ENCODE measurements at regions of chr3 and their contacts with region 1.

Region 1: GRCh38 chr3:10224784-10225665 is 23.2 kb upstream of the TATDN2 start:
- DNase-seq: peak; percentile 45
- H3K4me3 Mint-ChIP-seq: peak overlapping the region; percentile 73
- H3K27ac Mint-ChIP-seq: peak overlapping the region; percentile 97
- H3K4me1 Mint-ChIP-seq: peaks cover 74% of the 10 kb centered on the region
- H3K27me3 Mint-ChIP-seq: peaks cover 3% of the 10 kb centered on the region

Region 2: GRCh38 chr3:10142707-10143566 is 82.1 kb before region 1 on chr3:
- intact Hi-C with region 1: loop called (anchors 1 kb)
- DNase-seq: no peak
- H3K4me3 Mint-ChIP-seq: peak overlapping the region; percentile 90
- H3K27ac Mint-ChIP-seq: peak overlapping the region; percentile 85
- H3K4me1 Mint-ChIP-seq: peaks cover 25% of the 10 kb centered on the region
- H3K27me3 Mint-ChIP-seq: no peaks in the 10 kb centered on the region

Region 3: DNA sequence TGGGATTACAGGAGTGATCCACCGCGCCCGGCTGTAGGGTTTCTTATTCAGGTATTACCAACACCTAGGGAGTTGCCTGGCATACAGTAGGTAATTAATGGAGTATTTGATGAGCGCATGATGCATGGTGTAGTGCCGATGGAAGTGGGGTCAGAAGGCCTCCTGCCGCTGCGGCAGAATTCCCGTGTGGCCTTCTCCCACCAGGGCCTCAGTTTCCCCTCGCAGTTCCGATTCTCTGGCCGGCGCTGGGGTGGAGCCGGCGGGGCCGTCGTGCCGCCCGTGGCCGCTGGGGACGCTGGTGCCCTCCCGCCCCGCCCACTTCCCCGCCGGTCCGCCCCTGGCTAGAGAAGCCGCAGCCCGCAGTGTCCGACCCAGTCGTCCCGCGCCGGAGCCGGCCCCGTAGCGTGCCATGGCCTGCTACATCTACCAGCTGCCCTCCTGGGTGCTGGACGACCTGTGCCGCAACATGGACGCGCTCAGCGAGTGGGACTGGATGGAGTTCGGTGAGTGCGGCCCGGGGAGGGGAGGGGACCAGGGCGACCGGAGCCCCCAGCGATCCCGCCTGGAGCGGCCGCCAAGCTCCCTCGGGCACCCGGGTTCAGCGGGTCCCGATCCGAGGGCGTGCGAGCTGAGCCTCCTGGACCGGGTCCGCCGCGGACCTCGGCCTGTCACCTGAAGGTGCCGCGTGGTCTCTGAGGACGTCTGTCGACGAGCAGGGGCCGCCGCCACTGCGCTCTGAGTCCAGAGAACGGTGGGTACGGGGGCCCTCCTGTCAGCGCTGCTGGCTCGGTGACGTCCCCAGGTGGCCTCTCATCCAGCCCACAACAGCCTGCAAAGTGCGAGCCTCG is 60.3 kb before region 1 on chr3 and contains the start of gene IRAK2:
- intact Hi-C with region 1: loop called (anchors 1 kb)
- DNase-seq: peak; percentile 51
- H3K4me3 Mint-ChIP-seq: peak within 1 kb of the TSS; percentile 82
- H3K27ac Mint-ChIP-seq: peak within 1 kb of the TSS; percentile 44
- H3K4me1 Mint-ChIP-seq: peaks cover 35% of the 10 kb centered on the region
- H3K27me3 Mint-ChIP-seq: no peaks in the 10 kb centered on the region
- total RNA-seq, gene IRAK2: 8.1 and 8.6 TPM in 2 replicates

Region 4: DNA sequence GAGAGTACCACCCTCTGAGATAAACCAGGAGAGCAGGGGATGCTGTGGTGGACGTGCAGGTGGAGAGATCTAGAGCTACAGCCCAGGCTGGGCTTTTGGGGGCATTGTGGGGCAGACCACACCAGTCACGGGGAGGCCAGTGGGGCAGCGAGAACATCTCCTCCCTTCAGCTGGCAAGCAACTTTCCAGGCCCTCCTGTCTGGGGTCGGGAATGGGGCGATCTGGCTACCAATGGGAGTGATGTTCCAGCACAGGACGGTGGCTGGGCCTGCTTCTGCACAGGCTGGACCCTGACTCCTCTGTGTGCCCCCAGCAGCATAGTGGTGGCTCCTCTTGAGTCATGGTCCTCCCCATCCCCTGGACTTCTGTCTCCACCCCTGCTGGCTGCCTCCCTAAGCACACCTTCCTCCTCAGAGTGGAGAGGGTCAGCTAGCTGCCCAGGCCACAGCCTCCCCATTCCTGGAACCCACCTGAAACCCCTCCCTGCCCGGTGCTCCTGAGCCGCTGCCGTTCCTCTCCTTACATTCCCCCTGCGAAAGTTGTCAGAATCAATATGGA is 44.2 kb before region 1 on chr3:
- intact Hi-C with region 1: no loop called
- DNase-seq: no peak
- H3K4me3 Mint-ChIP-seq: no peak overlapping the region
- H3K27ac Mint-ChIP-seq: peak overlapping the region; percentile 61
- H3K4me1 Mint-ChIP-seq: peaks cover 28% of the 10 kb centered on the region
- H3K27me3 Mint-ChIP-seq: no peaks in the 10 kb centered on the region

Region 5: DNA sequence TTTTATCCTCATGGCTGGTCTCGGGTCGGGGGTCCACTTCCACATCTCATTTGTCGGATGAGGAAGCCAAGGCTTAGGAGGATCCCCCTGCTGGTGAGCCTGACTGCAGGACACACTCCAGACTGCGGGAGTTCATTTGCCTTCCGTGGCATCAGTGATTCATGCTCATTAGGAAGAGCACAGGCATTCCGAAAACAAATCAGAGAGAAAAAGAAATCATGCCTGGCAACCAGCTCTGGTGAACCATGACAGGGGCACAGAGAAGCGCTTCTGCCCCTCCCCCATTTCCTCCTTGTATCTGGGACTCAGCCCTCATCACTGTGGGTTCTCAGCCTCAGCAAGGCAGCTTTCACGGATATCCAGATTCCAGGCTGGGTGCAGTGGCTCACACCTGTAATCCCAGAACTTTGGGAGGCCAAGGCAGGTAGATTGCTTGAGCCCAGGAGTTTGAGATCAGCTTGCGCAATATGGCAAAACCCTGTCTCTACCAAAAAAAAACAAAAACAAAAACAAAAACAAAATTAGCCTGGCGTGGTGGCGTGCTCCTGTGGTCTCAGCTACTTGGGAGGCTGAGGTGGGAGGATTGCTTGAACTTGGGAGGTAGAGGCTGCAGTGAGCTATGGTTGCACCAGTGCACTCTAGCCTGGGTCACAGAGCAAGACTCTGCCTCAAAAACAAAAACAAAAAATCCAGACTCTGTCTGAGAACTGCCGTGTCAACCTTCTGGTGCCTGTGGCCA is 31.9 kb before region 1 on chr3:
- intact Hi-C with region 1: loop called (anchors 1 kb)
- DNase-seq: no peak
- H3K4me3 Mint-ChIP-seq: peak overlapping the region; percentile 63
- H3K27ac Mint-ChIP-seq: peak overlapping the region; percentile 82
- H3K4me1 Mint-ChIP-seq: peaks cover 75% of the 10 kb centered on the region
- H3K27me3 Mint-ChIP-seq: no peaks in the 10 kb centered on the region

Region 6: GRCh38 chr3:10213156-10213792 is 11.8 kb before region 1 on chr3:
- intact Hi-C with region 1: no loop called
- DNase-seq: no peak
- H3K4me3 Mint-ChIP-seq: no peak overlapping the region
- H3K27ac Mint-ChIP-seq: peak overlapping the region; percentile 10
- H3K4me1 Mint-ChIP-seq: peaks cover 5% of the 10 kb centered on the region
- H3K27me3 Mint-ChIP-seq: no peaks in the 10 kb centered on the region

Region 7: DNA sequence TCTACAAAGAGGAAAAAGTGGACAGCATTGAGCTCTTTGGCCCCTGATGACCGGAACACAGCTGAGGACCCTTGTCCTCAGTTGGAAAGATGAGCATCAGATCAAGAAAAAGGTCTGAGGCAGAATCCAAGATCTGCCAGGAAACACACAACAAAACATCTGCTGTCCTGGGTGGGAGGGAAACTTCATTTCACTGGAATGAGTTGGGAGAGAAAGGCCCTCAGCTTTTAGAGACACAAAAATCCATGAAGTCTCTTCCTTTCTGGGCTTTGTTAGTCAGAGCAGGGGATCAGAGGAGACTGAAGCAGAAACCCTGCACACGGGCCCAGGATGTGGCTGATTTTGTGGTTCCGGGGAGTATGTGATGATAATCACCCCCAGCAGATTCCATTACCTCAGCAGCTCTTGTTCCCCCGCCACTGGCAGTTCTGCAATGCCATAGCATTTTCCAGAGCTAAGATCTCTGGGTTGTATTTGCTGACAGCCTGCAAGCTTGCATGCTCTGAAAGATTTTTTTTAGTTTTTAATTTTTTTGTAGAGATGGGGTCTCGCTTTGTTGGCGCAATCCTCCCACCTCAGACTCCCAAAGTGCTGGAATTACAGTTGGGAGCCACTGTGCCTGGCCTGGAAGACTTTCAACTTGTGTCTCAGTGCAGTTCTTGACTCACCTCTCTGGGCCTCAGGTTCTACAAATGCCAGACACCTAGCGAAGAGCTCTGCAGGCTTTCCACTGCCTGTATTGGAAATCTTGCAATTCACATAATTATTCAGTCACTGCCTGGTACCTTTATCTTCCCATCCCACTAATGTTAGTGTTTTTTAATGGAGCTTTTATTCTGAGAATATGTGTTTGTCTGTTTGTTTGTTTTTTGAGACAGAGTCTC is 17.4 kb after region 1 on chr3:
- intact Hi-C with region 1: loop called (anchors 1 kb)
- DNase-seq: peak; percentile 81
- H3K4me3 Mint-ChIP-seq: peak overlapping the region; percentile 68
- H3K27ac Mint-ChIP-seq: peak overlapping the region; percentile 98
- H3K4me1 Mint-ChIP-seq: peaks cover 57% of the 10 kb centered on the region
- H3K27me3 Mint-ChIP-seq: no peaks in the 10 kb centered on the region

Region 8: DNA sequence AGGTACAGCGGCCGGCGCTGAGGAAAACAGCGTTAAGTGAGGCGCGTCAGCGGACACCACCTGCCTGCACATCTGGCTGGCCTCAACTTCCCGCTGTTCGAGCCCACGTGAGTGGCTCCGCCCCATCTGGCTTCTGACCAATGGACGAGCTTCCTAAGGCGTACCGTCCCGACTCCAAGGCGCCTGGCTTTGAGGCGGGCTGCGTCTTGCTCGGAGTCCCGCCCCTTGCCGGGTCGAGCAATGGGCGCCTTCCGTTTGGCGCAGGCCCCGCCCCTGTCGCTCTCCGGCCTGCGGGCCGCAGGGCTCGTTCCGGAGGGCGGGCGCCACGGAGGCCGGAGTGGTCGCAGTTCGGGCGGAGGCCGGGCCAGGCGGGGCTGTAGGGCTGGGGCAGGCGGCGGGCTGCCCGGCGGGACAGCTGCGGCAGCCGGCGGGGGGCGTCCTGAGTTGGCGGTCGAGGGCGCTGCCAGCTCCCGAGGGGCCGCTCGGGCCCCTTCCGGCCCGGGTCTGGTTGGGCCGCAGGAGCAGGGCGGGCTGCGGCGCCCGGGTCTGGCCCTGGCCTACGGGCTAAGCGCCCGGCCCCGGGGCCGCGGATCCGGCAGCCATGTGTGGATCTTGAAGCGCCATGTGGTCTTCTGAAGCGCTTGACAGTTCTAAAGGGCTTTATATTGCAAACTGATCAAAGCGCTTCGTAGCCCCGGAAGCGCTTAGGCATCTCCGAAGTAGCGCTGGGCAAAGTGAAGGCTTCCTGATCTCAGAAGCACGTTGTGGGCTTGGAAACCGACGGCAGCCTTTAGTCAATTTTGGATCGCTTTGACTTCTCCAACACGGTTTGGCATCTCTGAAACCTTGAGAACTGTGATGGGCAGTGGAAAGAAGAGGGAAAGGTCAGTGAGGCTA is 23.4 kb after region 1 on chr3 and contains the start of gene TATDN2:
- intact Hi-C with region 1: loop called (anchors 1 kb)
- DNase-seq: peak; percentile 93
- H3K4me3 Mint-ChIP-seq: peak within 1 kb of the TSS; percentile 97
- H3K27ac Mint-ChIP-seq: peak within 1 kb of the TSS; percentile 97
- H3K4me1 Mint-ChIP-seq: peaks cover 62% of the 10 kb centered on the region
- H3K27me3 Mint-ChIP-seq: no peaks in the 10 kb centered on the region
- total RNA-seq, gene TATDN2: 80.4 and 81.5 TPM in 2 replicates

Region 9: GRCh38 chr3:10263646-10264363 is 38.8 kb after region 1 on chr3:
- intact Hi-C with region 1: loop called (anchors 1 kb)
- DNase-seq: peak; percentile 51
- H3K4me3 Mint-ChIP-seq: peak overlapping the region; percentile 79
- H3K27ac Mint-ChIP-seq: peak overlapping the region; percentile 80
- H3K4me1 Mint-ChIP-seq: peaks cover 74% of the 10 kb centered on the region
- H3K27me3 Mint-ChIP-seq: no peaks in the 10 kb centered on the region

Region 10: GRCh38 chr3:11548721-11549131 is 1323.7 kb after region 1 on chr3:
- intact Hi-C with region 1: no loop called
- DNase-seq: no peak
- H3K4me3 Mint-ChIP-seq: no peak overlapping the region
- H3K27ac Mint-ChIP-seq: no peak overlapping the region
- H3K4me1 Mint-ChIP-seq: no peaks in the 10 kb centered on the region
- H3K27me3 Mint-ChIP-seq: no peaks in the 10 kb centered on the region